ENCODE measurements at regions of chr5 and their contacts with region 1.

Region 1: GRCh38 chr5:121962347-121962670 is 534 bp downstream of the SRFBP1 start:
- DNase-seq: no peak
- ATAC-seq: peak; percentile 8 to 19 (median 16)
- H3K4me3 ChIP-seq: peak overlapping the region; percentile 71 to 97
- H3K4me3 Mint-ChIP-seq: peak overlapping the region; percentile 93 to 99 (median 93)
- H3K27ac ChIP-seq: peak overlapping the region; percentile 68
- H3K27ac Mint-ChIP-seq: peak overlapping the region; percentile 94 to 96
- H3K4me1 ChIP-seq: peaks cover 12 to 17% of the 10 kb centered on the region in 2 experiments
- H3K4me1 Mint-ChIP-seq: peaks cover 43 to 47% (median 47%) of the 10 kb centered on the region in 3 donors
- H3K27me3 ChIP-seq: no peaks in the 10 kb centered on the region
- H3K27me3 Mint-ChIP-seq: peaks cover 9 to 10% of the 10 kb centered on the region in 2 donors

Region 2: DNA sequence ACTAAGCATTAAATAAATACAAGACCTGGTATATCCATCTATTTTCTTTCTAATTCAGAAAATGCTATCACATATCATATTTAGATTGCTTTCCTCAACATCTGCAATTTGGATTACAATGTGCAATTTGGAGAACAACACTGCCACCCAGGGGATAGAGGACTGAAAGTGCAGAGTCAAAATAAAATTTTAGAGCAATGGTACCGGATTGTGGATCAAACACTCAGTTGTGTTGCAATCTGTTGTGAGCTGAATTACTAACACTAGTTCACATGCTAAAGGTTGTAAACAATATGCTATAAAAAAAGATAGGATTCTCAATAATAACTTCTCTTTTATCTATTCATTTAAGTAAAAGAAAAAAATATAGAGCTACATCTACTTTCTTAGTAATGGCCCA is 12.4 kb before region 1 on chr5:
- CTCF ChIA-PET with region 1: interaction called, 3 to 12 read pairs
- POLR2A ChIA-PET with region 1: no interaction called
- DNase-seq: peak in 6 of 35 experiments; percentile 5 to 35 (median 11)
- ATAC-seq: peak in 1 of 4 experiments; percentile 45
- H3K4me3 ChIP-seq: no peak overlapping the region
- H3K4me3 Mint-ChIP-seq: no peak overlapping the region
- H3K27ac ChIP-seq: no peak overlapping the region
- H3K27ac Mint-ChIP-seq: no peak overlapping the region
- H3K4me1 ChIP-seq: no peaks in the 10 kb centered on the region
- H3K4me1 Mint-ChIP-seq: no peaks in the 10 kb centered on the region
- H3K27me3 ChIP-seq: no peaks in the 10 kb centered on the region
- H3K27me3 Mint-ChIP-seq: peaks cover 8 to 15% of the 10 kb centered on the region in 2 donors

Measured in T-cell (primary cell).